GM12878 (cell line): ENCODE measurements at regions of chr10 and their contacts with region 1.

Region 1: GRCh38 chr10:43671656-43672531 is 23.2 kb upstream of the ZNF32 start:
- DNase-seq: no peak
- ATAC-seq: peak; percentile 92
- H3K4me3 ChIP-seq: no peak overlapping the region
- H3K27ac ChIP-seq: no peak overlapping the region
- H3K4me1 ChIP-seq: no peaks in the 10 kb centered on the region
- H3K27me3 ChIP-seq: no peaks in the 10 kb centered on the region; a peak in 3 of 4 replicates
- CTCF ChIP-seq: peak; percentile 62 to 82 (median 69); a peak in 5 of 6 replicates
- EP300 ChIP-seq: no peak
- POLR2A ChIP-seq: no peak
- RAD21 ChIP-seq: peak; percentile 92

Region 2: DNA sequence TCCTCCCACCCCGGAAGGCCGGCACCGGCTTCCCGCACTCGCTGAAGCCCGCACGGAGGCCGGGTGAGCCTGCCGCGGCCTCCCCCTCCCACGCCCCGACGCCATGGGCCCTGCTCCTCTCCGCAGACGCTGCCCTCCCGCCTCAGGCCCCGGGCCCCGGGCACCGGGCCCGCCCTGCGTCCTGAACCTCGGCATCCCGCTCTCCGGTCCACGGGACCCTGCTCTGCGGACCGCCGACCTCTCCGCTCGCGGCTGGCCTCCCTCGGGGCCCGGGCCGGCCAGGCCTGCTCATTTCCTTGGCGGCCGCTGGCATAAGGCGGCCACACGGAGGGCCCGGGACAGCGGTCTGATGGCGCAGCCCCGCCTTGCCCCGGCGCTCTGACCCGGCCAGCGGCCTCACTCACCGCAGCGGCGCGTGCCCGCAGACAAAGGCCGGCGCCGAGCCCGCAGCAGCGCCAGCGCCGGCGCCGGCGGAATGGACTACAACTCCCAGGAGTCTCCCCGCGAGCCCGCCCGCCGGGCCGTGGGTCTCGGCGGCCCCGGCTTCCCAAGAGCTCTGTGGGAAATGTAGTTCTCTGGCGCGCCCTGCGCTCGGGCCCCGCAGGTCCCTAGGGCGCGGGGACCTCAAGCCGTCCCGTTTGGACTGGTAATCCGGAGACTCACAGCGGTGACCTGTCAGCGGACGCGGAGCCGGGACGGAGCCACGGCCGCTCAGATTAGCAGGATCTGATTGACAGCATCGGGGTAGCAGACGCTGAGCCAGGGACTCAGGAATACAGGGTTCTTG is 23.3 kb before region 1 on chr10 and contains the start of gene ZNF32:
- CTCF ChIA-PET with region 1: no interaction called
- POLR2A ChIA-PET with region 1: no interaction called
- RAD21 ChIA-PET with region 1: no interaction called
- SMC1A ChIA-PET with region 1: no interaction called
- in situ Hi-C with region 1: no loop called
- intact Hi-C with region 1: no loop called
- DNase-seq: no peak
- ATAC-seq: peak; percentile 100
- H3K4me3 ChIP-seq: peak within 1 kb of the TSS; percentile 83
- H3K27ac ChIP-seq: peak within 1 kb of the TSS; percentile 62
- H3K4me1 ChIP-seq: no peaks in the 10 kb centered on the region
- H3K27me3 ChIP-seq: no peaks in the 10 kb centered on the region
- CTCF ChIP-seq: no peak
- EP300 ChIP-seq: no peak
- POLR2A ChIP-seq: peak; percentile 69
- RAD21 ChIP-seq: no peak
- polyA plus RNA-seq, gene ZNF32: 2.6 to 3.3 TPM

Region 3: GRCh38 chr10:43683451-43684291 is 11.8 kb after region 1 on chr10:
- CTCF ChIA-PET with region 1: interaction called, 19 read pairs
- POLR2A ChIA-PET with region 1: no interaction called
- RAD21 ChIA-PET with region 1: interaction called, 6 read pairs
- SMC1A ChIA-PET with region 1: interaction called, 3 read pairs
- in situ Hi-C with region 1: no loop called
- intact Hi-C with region 1: no loop called
- DNase-seq: no peak
- ATAC-seq: peak; percentile 79
- H3K4me3 ChIP-seq: no peak overlapping the region
- H3K27ac ChIP-seq: no peak overlapping the region
- H3K4me1 ChIP-seq: no peaks in the 10 kb centered on the region
- H3K27me3 ChIP-seq: no peaks in the 10 kb centered on the region
- CTCF ChIP-seq: peak; percentile 41 to 62 (median 48)
- EP300 ChIP-seq: no peak
- POLR2A ChIP-seq: no peak
- RAD21 ChIP-seq: 0 out of 2 replicates have a peak, but pooled peaks have one; percentile 18

Region 4: DNA sequence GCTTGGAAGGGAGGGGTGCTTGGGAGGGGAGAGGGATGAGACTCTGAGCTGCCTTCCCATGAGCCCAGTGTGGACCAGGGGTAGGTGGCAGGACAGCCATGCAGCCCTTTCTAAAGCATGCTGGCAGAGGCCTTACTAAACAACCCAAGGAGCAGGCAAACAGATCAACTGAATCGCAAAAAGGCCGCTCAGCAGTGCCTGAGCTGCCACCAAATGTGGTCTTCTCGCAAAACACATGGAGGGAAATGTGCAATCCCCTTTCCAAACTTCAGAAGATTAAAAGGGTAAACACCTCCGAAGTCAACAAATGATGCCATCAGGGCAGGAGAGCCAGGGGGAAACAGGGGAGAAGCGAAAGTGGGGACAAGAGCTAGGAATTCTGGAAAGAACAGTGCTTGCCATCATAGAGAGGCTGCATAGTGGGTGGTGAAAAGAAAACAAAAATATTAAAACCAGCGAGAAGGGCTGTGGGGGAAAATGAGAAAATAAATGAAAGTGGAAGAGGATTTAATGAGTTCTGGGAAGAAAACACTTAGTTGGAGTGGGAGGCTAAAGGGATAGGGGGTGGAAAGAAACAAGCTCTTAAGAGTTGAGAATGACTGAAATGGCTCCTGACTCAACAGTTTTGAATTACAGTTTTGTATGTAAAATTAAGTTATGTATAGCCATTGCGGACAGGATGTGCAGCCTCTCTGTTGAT is 39.0 kb after region 1 on chr10:
- CTCF ChIA-PET with region 1: no interaction called
- POLR2A ChIA-PET with region 1: no interaction called
- RAD21 ChIA-PET with region 1: no interaction called
- SMC1A ChIA-PET with region 1: no interaction called
- in situ Hi-C with region 1: no loop called
- intact Hi-C with region 1: no loop called
- DNase-seq: no peak
- ATAC-seq: no peak
- H3K4me3 ChIP-seq: no peak overlapping the region
- H3K27ac ChIP-seq: no peak overlapping the region
- H3K4me1 ChIP-seq: no peaks in the 10 kb centered on the region
- H3K27me3 ChIP-seq: peaks cover 0 to 2% of the 10 kb centered on the region in 2 experiments; a peak in 2 of 4 replicates
- CTCF ChIP-seq: no peak
- EP300 ChIP-seq: no peak
- POLR2A ChIP-seq: no peak
- RAD21 ChIP-seq: no peak

Region 5: GRCh38 chr10:44071479-44071878 is 399.6 kb after region 1 on chr10:
- CTCF ChIA-PET with region 1: no interaction called
- POLR2A ChIA-PET with region 1: no interaction called
- RAD21 ChIA-PET with region 1: no interaction called
- SMC1A ChIA-PET with region 1: no interaction called
- in situ Hi-C with region 1: no loop called
- intact Hi-C with region 1: no loop called
- DNase-seq: no peak
- ATAC-seq: no peak
- H3K4me3 ChIP-seq: no peak overlapping the region
- H3K27ac ChIP-seq: no peak overlapping the region
- H3K4me1 ChIP-seq: no peaks in the 10 kb centered on the region
- H3K27me3 ChIP-seq: no peaks in the 10 kb centered on the region
- CTCF ChIP-seq: no peak
- EP300 ChIP-seq: no peak
- POLR2A ChIP-seq: no peak
- RAD21 ChIP-seq: no peak

Region 6: GRCh38 chr10:44310762-44311562 is 639.1 kb after region 1 on chr10:
- CTCF ChIA-PET with region 1: no interaction called
- POLR2A ChIA-PET with region 1: no interaction called
- RAD21 ChIA-PET with region 1: no interaction called
- SMC1A ChIA-PET with region 1: no interaction called
- in situ Hi-C with region 1: no loop called
- intact Hi-C with region 1: loop called (anchors 5 kb)
- DNase-seq: no peak
- ATAC-seq: peak; percentile 88
- H3K4me3 ChIP-seq: no peak overlapping the region; the same call in 1 of the 2 replicates
- H3K27ac ChIP-seq: no peak overlapping the region
- H3K4me1 ChIP-seq: peaks cover 29% of the 10 kb centered on the region
- H3K27me3 ChIP-seq: no peaks in the 10 kb centered on the region
- CTCF ChIP-seq: peak; percentile 65 to 84 (median 66); a peak in 5 of 6 replicates
- EP300 ChIP-seq: no peak
- POLR2A ChIP-seq: peak; percentile 51; the same call in 1 of the 2 replicates
- RAD21 ChIP-seq: peak; percentile 49

Region 7: DNA sequence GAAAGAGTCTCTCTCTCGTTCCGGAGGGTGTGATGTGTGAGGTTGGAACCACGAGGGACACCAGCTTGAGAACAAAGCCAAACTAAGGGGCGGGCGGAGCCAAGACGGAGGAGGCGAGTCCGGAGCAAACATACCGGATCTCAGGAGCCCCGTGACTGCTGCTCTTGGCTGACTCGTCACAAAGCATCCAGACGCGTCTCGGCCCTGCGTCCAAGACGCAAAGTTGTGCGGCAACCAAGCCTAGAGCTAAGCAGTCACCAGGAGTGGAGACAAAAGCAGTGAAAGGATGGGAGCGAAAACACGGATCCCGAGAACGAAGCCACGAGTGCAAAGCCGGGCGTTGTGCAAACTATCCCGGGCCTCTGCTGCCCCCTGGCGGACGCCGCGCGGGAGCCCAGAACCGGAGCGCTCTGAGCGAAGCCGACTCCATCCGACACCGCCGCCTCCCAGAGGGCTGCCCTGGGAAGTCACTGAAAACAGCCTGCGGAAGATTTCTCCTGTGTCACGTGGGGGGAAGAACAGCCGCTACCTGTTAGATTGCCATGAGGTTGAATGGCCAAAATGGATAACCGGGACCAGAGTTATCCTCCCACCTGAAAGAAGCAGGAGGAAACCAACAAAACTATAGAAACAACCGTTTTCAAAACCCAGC is 1192.9 kb after region 1 on chr10:
- CTCF ChIA-PET with region 1: interaction called, 3 read pairs
- POLR2A ChIA-PET with region 1: no interaction called
- RAD21 ChIA-PET with region 1: no interaction called
- SMC1A ChIA-PET with region 1: no interaction called
- in situ Hi-C with region 1: loop called (anchors 5 kb)
- intact Hi-C with region 1: loop called (anchors 2 kb)
- DNase-seq: peak; percentile 20
- ATAC-seq: peak; percentile 98
- H3K4me3 ChIP-seq: peak overlapping the region; percentile 39; the same call in 1 of the 2 replicates
- H3K27ac ChIP-seq: no peak overlapping the region
- H3K4me1 ChIP-seq: peaks cover 8% of the 10 kb centered on the region; the same call in 1 of the 2 replicates
- H3K27me3 ChIP-seq: peaks cover 2% of the 10 kb centered on the region in 2 experiments; a peak in 3 of 4 replicates
- CTCF ChIP-seq: peak; percentile 87 to 94 (median 89)
- EP300 ChIP-seq: no peak
- POLR2A ChIP-seq: no peak
- RAD21 ChIP-seq: peak; percentile 60